ENCODE measurements at regions of chr1 and their contacts with region 1.

Region 1: GRCh38 chr1:101238681-101239094 is 1.9 kb downstream of the S1PR1 start:
- DNase-seq: peak; percentile 79
- H3K4me3 Mint-ChIP-seq: peak overlapping the region; percentile 97
- H3K27ac Mint-ChIP-seq: peak overlapping the region; percentile 95
- H3K4me1 Mint-ChIP-seq: peaks cover 77% of the 10 kb centered on the region
- H3K27me3 Mint-ChIP-seq: no peaks in the 10 kb centered on the region

Region 2: GRCh38 chr1:100921109-100921706 is 317.5 kb before region 1 on chr1:
- intact Hi-C with region 1: loop called (anchors 1 kb)
- DNase-seq: no peak
- H3K4me3 Mint-ChIP-seq: no peak overlapping the region
- H3K27ac Mint-ChIP-seq: no peak overlapping the region
- H3K4me1 Mint-ChIP-seq: peaks cover 29% of the 10 kb centered on the region
- H3K27me3 Mint-ChIP-seq: no peaks in the 10 kb centered on the region

Region 3: DNA sequence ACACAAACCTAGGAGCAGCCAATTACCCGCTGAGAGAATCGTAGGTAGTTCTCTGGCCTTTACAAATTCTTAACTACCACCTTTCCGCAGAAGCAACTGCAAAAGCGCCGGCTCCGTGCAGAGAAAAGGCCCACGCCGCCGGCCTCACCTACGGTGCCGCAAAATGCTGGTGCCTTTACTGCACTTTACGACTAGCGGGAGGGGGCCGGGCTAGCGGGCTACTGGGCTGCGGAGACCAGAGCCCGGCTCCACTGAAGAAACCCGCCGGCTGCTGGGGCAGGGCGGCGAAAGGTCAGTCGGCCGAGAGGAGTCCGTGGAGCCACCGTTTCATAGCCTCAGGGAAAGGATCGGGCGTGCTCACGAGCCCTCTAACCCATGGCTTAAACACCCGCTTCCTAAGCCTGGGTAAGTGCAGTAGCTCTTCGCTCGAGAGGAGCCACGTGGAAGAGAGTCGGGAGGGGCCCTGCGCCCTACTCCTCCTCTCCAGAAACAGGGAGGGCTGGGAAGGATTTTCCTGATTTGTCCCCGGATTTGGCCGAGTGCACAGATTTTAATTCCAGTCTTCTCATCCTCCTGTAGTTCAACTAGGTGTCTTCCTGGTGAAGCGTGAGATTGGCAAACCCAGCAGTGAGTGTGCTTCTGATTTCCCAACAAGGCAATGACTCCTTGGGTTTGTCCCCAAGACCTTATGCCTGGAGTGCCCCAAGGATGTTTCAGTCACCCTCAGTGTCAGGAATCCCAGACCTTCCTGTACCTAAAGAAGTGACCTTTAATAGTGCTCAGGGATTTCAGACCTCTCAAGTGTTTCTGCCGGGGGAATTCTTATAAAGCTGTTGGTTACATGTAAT is 212.8 kb before region 1 on chr1 and contains the start of gene DPH5:
- intact Hi-C with region 1: loop called (anchors 1 kb)
- DNase-seq: peak; percentile 84
- H3K4me3 Mint-ChIP-seq: peak within 1 kb of the TSS; percentile 93
- H3K27ac Mint-ChIP-seq: peak within 1 kb of the TSS; percentile 87
- H3K4me1 Mint-ChIP-seq: peaks cover 58% of the 10 kb centered on the region
- H3K27me3 Mint-ChIP-seq: no peaks in the 10 kb centered on the region
- total RNA-seq, gene DPH5: 31.7 and 32.2 TPM in 2 replicates

Region 4: DNA sequence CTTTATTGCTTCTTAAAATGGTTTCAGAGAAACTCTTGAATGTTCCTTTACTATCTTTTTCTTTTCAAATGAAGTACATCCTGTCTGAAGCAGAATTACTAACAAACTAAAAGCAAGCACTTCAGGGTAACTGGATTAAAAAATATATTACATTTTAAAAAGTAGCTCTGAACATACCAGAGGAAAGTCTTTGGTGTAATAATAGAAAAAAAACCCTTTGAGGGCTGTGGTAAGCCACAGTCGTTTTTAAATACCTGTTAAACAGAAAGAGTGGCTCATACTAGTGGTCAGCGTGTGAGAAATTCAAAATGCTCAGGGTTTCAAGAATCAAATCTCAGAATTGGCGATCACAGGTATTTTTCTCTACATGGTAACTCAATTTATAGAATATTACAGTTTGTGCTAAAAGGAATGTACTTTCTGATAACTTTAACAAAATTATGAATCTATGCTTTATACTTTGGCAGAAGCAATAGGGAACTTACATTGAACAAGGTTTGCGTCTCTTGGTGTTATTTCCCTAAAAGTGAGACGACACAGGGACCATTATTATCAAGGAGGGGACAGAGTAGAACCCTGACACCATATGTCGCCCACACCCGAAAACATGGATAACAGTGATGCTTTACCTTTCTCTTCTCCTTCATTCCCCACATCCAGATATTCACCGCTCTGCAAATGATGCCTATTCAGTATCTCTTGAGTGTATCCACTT is 116.1 kb before region 1 on chr1:
- intact Hi-C with region 1: loop called (anchors 1 kb)
- DNase-seq: no peak
- H3K4me3 Mint-ChIP-seq: peak overlapping the region; percentile 23
- H3K27ac Mint-ChIP-seq: peak overlapping the region; percentile 11
- H3K4me1 Mint-ChIP-seq: peaks cover 39% of the 10 kb centered on the region
- H3K27me3 Mint-ChIP-seq: peaks cover 4% of the 10 kb centered on the region

Region 5: DNA sequence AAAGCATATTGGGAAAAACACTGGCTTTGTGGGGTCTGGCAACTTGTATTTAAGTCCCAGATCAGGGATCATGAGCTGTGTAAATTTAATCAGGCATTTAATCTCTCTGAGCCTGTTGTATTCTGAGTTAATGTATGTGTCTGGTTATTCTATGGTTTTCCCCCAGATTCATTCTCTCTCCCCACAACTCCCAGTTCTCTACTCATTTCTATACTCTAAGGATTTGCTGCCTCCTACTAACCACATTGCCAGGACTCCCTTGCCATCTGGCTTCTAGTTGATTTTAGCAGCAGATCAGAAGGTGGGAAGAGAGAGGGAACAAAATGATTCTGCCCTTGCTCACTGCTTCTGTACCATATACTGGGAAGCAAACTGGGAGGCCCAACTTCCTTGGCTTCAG is 33.2 kb before region 1 on chr1:
- intact Hi-C with region 1: loop called (anchors 1 kb)
- DNase-seq: no peak
- H3K4me3 Mint-ChIP-seq: no peak overlapping the region
- H3K27ac Mint-ChIP-seq: peak overlapping the region; percentile 18
- H3K4me1 Mint-ChIP-seq: peaks cover 19% of the 10 kb centered on the region
- H3K27me3 Mint-ChIP-seq: no peaks in the 10 kb centered on the region

Region 6: GRCh38 chr1:101338714-101339430 is 100.2 kb after region 1 on chr1:
- intact Hi-C with region 1: no loop called
- DNase-seq: no peak
- H3K4me3 Mint-ChIP-seq: no peak overlapping the region
- H3K27ac Mint-ChIP-seq: no peak overlapping the region
- H3K4me1 Mint-ChIP-seq: no peaks in the 10 kb centered on the region
- H3K27me3 Mint-ChIP-seq: peaks cover 16% of the 10 kb centered on the region

Region 7: GRCh38 chr1:101357444-101357986 is 118.8 kb after region 1 on chr1:
- intact Hi-C with region 1: loop called (anchors 5 kb)
- DNase-seq: peak; percentile 69
- H3K4me3 Mint-ChIP-seq: no peak overlapping the region
- H3K27ac Mint-ChIP-seq: no peak overlapping the region
- H3K4me1 Mint-ChIP-seq: peaks cover 9% of the 10 kb centered on the region
- H3K27me3 Mint-ChIP-seq: peaks cover 23% of the 10 kb centered on the region

Measured in activated T-helper 1 cell treated with anti-CD3 and anti-CD28 coated beads, Interleukin-12 subunit alpha, Interleukin-12 subunit beta, Interleukin-2, Interleukin-4 antibody, amounts not matched to agents 30 ng/mL and 10 ng/mL and 1 ng/mL, durations not matched to agents 14 hours and 24 hours and 36 hours (primary cell).